HepG2 (cell line): ENCODE measurements at regions of chr11 and their contacts with region 1.

Region 1: GRCh38 chr11:67401495-67402191 is at the start of gene PPP1CA:
- DNase-seq: peak; percentile 75
- ATAC-seq: peak; percentile 78
- H3K4me3 ChIP-seq: peak within 1 kb of the TSS; percentile 77 to 98 (median 94)
- H3K27ac ChIP-seq: peak within 1 kb of the TSS; percentile 84
- H3K4me1 ChIP-seq: peaks cover 58% of the 10 kb centered on the region
- H3K27me3 ChIP-seq: no peaks in the 10 kb centered on the region
- CTCF ChIP-seq: peak; percentile 63
- EP300 ChIP-seq: no peak
- POLR2A ChIP-seq: peak; percentile 69 to 92
- RAD21 ChIP-seq: peak; percentile 84
- total RNA-seq, gene PPP1CA: 170 and 188 TPM in 2 replicates

Region 2: GRCh38 chr11:67323526-67323925 is 78.1 kb before region 1 on chr11:
- CTCF ChIA-PET with region 1: no interaction called
- POLR2A ChIA-PET with region 1: no interaction called
- in situ Hi-C with region 1: no loop called
- intact Hi-C with region 1: no loop called
- DNase-seq: no peak
- ATAC-seq: no peak
- H3K4me3 ChIP-seq: no peak overlapping the region
- H3K27ac ChIP-seq: no peak overlapping the region
- H3K4me1 ChIP-seq: peaks cover 7% of the 10 kb centered on the region
- H3K27me3 ChIP-seq: no peaks in the 10 kb centered on the region
- CTCF ChIP-seq: no peak
- EP300 ChIP-seq: no peak
- POLR2A ChIP-seq: no peak
- RAD21 ChIP-seq: no peak

Region 3: GRCh38 chr11:67373925-67374618 is 27.6 kb before region 1 on chr11:
- CTCF ChIA-PET with region 1: no interaction called
- POLR2A ChIA-PET with region 1: interaction called, 12 read pairs
- in situ Hi-C with region 1: no loop called
- intact Hi-C with region 1: no loop called
- DNase-seq: peak; percentile 82
- ATAC-seq: peak; percentile 65
- H3K4me3 ChIP-seq: peak overlapping the region; percentile 69 to 75 (median 75)
- H3K27ac ChIP-seq: no peak overlapping the region
- H3K4me1 ChIP-seq: peaks cover 32% of the 10 kb centered on the region
- H3K27me3 ChIP-seq: peaks cover 3 to 8% of the 10 kb centered on the region in 2 experiments; a peak in 3 of 5 replicates
- CTCF ChIP-seq: peak; percentile 72
- EP300 ChIP-seq: peak in 1 of 2 experiments; percentile 5; a peak in 1 of 4 replicates
- POLR2A ChIP-seq: no peak
- RAD21 ChIP-seq: peak; percentile 38

Region 4: DNA sequence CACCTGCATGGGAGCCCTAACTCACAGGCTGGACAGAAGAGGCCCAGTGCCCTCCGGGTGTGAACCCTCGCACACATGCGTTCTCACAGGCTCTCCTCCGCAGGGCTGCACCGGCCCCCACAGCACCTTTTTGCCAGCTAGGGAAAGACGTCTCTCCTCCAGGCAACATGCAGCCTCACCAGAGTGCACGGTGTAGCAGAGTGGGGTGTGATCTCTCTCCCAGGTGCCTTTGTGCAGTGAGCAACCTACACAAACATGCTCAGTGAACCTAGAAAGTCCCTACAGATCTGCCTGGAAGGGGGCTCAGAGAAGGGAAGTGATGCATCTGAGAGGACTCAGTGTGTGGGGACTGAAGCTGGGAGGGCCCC is 10.1 kb after region 1 on chr11:
- CTCF ChIA-PET with region 1: no interaction called
- POLR2A ChIA-PET with region 1: interaction called, 78 read pairs
- in situ Hi-C with region 1: no loop called
- intact Hi-C with region 1: no loop called
- DNase-seq: no peak
- ATAC-seq: peak; percentile 27
- H3K4me3 ChIP-seq: peak overlapping the region in 1 of 3 experiments; percentile 4; a peak in 1 of 6 replicates
- H3K27ac ChIP-seq: no peak overlapping the region
- H3K4me1 ChIP-seq: peaks cover 52% of the 10 kb centered on the region
- H3K27me3 ChIP-seq: peaks cover 10 to 53% of the 10 kb centered on the region in 2 experiments; a peak in 4 of 5 replicates
- CTCF ChIP-seq: no peak
- EP300 ChIP-seq: no peak
- POLR2A ChIP-seq: no peak
- RAD21 ChIP-seq: no peak

Region 5: GRCh38 chr11:67428052-67428914 is 26.6 kb after region 1 on chr11 and contains the start of gene RPS6KB2:
- CTCF ChIA-PET with region 1: no interaction called
- POLR2A ChIA-PET with region 1: interaction called, 78 read pairs
- in situ Hi-C with region 1: no loop called
- intact Hi-C with region 1: no loop called
- DNase-seq: peak; percentile 93
- ATAC-seq: peak; percentile 81
- H3K4me3 ChIP-seq: peak within 1 kb of the TSS; percentile 84 to 98 (median 90)
- H3K27ac ChIP-seq: peak within 1 kb of the TSS; percentile 85
- H3K4me1 ChIP-seq: peaks cover 36% of the 10 kb centered on the region
- H3K27me3 ChIP-seq: no peaks in the 10 kb centered on the region; a peak in 1 of 5 replicates
- CTCF ChIP-seq: no peak
- EP300 ChIP-seq: peak in 1 of 2 experiments; percentile 32; a peak in 1 of 4 replicates
- POLR2A ChIP-seq: peak; percentile 80
- RAD21 ChIP-seq: no peak
- total RNA-seq, gene RPS6KB2: 35.3 and 54.8 TPM in 2 replicates

Region 6: GRCh38 chr11:67482825-67483798 is 81.5 kb after region 1 on chr11 and contains the start of gene AIP:
- CTCF ChIA-PET with region 1: interaction called, 3 read pairs
- POLR2A ChIA-PET with region 1: interaction called, 14 read pairs
- in situ Hi-C with region 1: no loop called
- intact Hi-C with region 1: no loop called
- DNase-seq: peak; percentile 95
- ATAC-seq: peak; percentile 97
- H3K4me3 ChIP-seq: peak within 1 kb of the TSS; percentile 59 to 75 (median 59)
- H3K27ac ChIP-seq: peak within 1 kb of the TSS; percentile 66
- H3K4me1 ChIP-seq: peaks cover 34% of the 10 kb centered on the region
- H3K27me3 ChIP-seq: no peaks in the 10 kb centered on the region
- CTCF ChIP-seq: peak; percentile 15; the same call in 1 of the 2 replicates
- EP300 ChIP-seq: no peak
- POLR2A ChIP-seq: peak; percentile 62 to 68
- RAD21 ChIP-seq: no peak
- total RNA-seq, gene AIP: 51.8 and 54.7 TPM in 2 replicates

Region 7: GRCh38 chr11:68962527-68963250 is 1561.0 kb after region 1 on chr11:
- CTCF ChIA-PET with region 1: no interaction called
- POLR2A ChIA-PET with region 1: no interaction called
- in situ Hi-C with region 1: no loop called
- intact Hi-C with region 1: no loop called
- DNase-seq: no peak
- ATAC-seq: peak; percentile 41; the same call in 1 of the 3 replicates
- H3K4me3 ChIP-seq: no peak overlapping the region
- H3K27ac ChIP-seq: no peak overlapping the region
- H3K4me1 ChIP-seq: no peaks in the 10 kb centered on the region
- H3K27me3 ChIP-seq: peaks cover 2 to 21% of the 10 kb centered on the region in 2 experiments
- CTCF ChIP-seq: peak; percentile 42
- EP300 ChIP-seq: no peak
- POLR2A ChIP-seq: no peak
- RAD21 ChIP-seq: no peak